Transverse colon (tissue), 4 donors: ENCODE measurements at regions of chr13 and their contacts with region 1.

Region 1: GRCh38 chr13:101003566-101003965 is 329.0 kb upstream of the TMTC4 start:
- DNase-seq: no peak
- H3K4me3 ChIP-seq: no peak overlapping the region
- H3K27ac ChIP-seq: no peak overlapping the region
- H3K4me1 ChIP-seq: no peaks in the 10 kb centered on the region
- H3K27me3 ChIP-seq: no peaks in the 10 kb centered on the region
- CTCF ChIP-seq: no peak
- EP300 ChIP-seq: no peak
- POLR2A ChIP-seq: no peak

Region 2: GRCh38 chr13:100808330-100809266 is 195.0 kb before region 1 on chr13:
- in situ Hi-C with region 1: no loop called
- intact Hi-C with region 1: no loop called
- DNase-seq: no peak
- H3K4me3 ChIP-seq: no peak overlapping the region
- H3K27ac ChIP-seq: no peak overlapping the region
- H3K4me1 ChIP-seq: no peaks in the 10 kb centered on the region
- H3K27me3 ChIP-seq: no peaks in the 10 kb centered on the region
- CTCF ChIP-seq: no peak
- EP300 ChIP-seq: no peak
- POLR2A ChIP-seq: no peak

Region 3: DNA sequence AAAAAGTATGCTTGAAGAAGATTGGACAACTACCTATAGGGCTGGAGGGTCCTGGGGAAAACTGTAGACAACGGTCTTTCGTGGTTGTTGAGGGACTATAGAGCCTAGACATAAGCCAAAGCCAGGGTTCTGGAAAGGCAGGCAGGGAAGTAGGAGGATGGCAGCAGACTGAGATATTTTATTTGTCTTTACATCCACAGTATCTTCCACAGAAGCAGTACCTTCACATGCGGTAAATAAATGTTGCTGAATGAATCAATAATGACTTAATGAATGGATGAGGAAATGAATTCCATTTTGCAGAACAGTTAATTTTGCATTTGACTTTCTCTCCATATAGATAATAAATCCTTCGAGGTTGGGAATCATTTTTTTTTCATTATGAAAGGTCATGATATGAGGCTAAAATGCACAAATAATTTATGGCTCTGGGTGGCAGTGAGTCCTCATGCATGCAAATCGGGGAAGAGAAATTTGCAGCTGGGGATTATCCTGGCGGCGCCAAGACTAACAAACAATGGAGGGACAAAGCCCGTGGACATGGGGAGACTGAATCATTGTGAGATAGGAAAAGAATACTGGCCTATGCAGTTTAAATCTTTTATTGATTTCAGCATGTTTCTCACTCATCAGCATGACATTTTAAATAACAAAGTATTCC is 1944.3 kb after region 1 on chr13:
- in situ Hi-C with region 1: no loop called
- intact Hi-C with region 1: loop called (anchors 5 kb)
- DNase-seq: no peak
- H3K4me3 ChIP-seq: no peak overlapping the region
- H3K27ac ChIP-seq: no peak overlapping the region
- H3K4me1 ChIP-seq: peaks cover 0 to 12% (median 3%) of the 10 kb centered on the region in 4 donors
- H3K27me3 ChIP-seq: peaks cover 60% of the 10 kb centered on the region
- CTCF ChIP-seq: no peak
- EP300 ChIP-seq: no peak
- POLR2A ChIP-seq: no peak